ENCODE measurements at regions of chr3 and their contacts with region 1.

Region 1: DNA sequence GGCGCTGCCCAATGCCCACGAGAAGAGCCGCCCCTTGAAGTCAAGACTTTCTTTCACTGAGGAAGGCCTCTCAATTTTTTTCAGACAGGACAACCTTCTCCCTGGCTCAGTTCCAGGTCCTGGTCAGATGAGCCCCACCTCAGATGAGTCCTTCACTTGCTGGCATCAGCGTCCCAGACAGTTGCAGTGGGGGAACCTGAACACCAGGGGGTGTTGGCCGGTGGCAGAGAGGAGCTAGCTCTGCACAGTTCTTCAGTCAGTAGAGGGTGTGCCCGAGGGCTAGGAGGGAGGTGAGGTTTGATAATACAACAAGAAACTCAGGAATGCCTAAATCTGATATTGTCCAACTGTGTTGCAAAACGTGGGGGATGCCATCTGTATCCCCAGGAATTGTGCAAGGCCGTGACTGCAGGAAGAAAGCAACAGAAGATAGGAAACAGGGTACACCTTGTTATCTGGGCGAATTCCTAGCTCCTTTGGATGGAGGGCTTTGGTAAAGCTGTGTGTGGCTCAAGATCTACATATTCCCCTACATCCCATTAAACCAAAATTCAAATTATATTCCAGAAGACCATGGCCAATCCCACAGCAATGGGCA is 34.3 kb downstream of the CCR3 start:
- DNase-seq: peak; percentile 27
- H3K4me3 ChIP-seq: no peak overlapping the region
- H3K27ac ChIP-seq: no peak overlapping the region
- H3K4me1 ChIP-seq: no peaks in the 10 kb centered on the region
- H3K27me3 ChIP-seq: peaks cover 11% of the 10 kb centered on the region; the same call in 1 of the 2 replicates
- CTCF ChIP-seq: peak; percentile 38
- EP300 ChIP-seq: no peak
- RAD21 ChIP-seq: peak; percentile 34

Region 2: GRCh38 chr3:46378426-46378942 is 101.9 kb after region 1 on chr3:
- CTCF ChIA-PET with region 1: interaction called, 10 read pairs
- POLR2A ChIA-PET with region 1: no interaction called
- DNase-seq: peak; percentile 52
- H3K4me3 ChIP-seq: no peak overlapping the region; a peak in 1 of 4 replicates
- H3K27ac ChIP-seq: no peak overlapping the region
- H3K4me1 ChIP-seq: no peaks in the 10 kb centered on the region; a peak in 1 of 4 replicates
- H3K27me3 ChIP-seq: peaks cover 47% of the 10 kb centered on the region
- CTCF ChIP-seq: peak; percentile 65
- EP300 ChIP-seq: no peak
- RAD21 ChIP-seq: peak; percentile 80